Activated CD4-positive, alpha-beta memory T cell treated with anti-CD3 and anti-CD28 coated beads for 36 hours (primary cell): ENCODE measurements at regions of chr15 and their contacts with region 1.

Region 1: DNA sequence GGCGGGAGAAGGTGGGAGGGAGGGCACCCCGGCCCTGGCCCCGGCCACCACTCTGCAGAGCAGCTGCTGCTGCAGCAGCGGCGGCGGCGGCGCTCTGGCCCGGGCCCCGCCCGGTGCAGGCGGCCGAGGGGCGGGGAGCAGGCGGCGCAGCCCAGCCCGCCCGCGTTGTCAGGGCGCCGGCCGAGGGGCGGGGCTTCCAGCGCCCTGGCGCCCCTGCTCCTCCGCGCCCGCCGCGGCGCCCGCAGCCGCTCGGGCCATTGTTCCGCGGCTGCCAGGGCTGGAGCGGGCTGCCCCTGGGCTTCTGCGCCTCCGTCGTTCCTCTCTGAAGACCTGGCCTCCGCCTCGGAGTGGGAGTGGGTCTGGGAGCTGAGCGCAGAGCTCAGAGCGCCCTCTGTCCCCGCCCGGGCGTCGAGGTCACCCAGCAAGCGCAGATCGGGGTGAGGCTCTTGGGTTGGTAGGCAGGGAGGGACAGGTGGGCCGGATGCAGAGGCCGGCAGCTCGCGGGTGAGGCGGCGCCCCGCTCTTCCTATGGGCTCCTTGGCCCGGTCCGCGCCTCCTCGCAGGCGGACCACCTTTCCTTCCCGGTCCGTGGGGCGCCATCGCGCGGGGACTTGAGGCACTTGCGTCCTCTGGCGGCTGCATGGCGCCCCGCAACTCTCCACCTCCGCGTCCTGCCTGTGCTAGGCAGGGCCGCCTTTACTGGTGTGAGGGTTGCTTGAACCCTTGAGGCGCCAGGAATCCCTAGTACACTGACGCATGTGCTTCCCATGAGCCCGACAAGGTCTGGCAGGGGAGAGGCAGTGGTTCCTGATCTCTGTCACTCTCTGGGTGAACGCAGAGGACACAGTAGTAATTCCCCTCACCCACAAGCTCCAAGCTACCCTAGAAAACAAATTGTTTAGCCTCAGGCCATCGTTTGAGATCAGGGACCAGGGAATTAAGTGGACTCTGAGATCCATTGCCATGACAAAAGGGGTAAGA is at the start of gene LPCAT4:
- DNase-seq: peak; percentile 91
- H3K4me3 Mint-ChIP-seq: peak within 1 kb of the TSS; percentile 96
- H3K27ac Mint-ChIP-seq: peak within 1 kb of the TSS; percentile 96
- H3K4me1 Mint-ChIP-seq: peaks cover 41% of the 10 kb centered on the region
- H3K27me3 Mint-ChIP-seq: no peaks in the 10 kb centered on the region
- total RNA-seq, gene LPCAT4: 62.5 to 71.3 TPM

Region 2: DNA sequence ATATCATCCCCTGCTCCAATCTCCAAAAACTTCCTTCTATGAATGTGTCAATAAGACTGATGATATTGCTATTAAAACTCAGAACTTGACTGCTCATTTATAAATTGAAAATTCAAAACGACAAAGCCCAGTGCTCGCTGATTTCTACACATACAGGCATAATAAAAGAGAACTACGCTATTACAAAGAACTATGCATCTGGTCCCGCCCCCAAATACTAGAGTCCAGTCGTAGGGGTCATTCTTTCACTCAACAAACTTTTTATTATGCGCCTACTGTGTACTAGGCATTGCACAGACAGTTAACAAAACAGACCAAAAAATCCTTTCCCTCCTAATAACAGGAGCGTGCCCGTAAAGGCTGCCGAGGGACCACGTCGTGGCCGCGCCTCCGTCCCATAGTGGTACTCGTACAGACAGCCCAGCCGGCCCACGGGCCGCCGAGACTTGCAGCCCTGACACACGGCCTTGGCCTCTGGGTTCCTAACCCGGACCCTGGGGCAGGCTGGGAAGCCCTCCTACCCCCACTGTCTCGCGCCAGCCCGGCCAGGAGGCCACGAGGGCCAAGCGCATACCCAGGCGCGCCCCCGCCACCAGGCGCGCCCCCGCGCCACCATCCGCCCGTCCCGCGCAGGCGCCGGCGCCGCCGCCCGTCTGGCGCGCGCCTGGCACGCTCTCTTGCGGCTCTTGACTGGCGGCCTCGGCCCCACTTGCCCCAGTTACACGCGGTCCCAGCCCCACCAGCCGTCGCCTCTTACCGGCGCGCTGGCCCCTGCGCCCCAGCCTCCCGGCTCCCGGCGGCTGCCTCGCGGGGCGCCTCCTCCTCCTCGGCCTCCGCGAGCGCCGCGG is 329.1 kb before region 1 on chr15:
- CTCF ChIA-PET with region 1: interaction called, 3 read pairs
- POLR2A ChIA-PET with region 1: no interaction called
- intact Hi-C with region 1: loop called (anchors 1 kb)
- DNase-seq: peak; percentile 79
- H3K4me3 Mint-ChIP-seq: peak overlapping the region; percentile 85
- H3K27ac Mint-ChIP-seq: peak overlapping the region; percentile 90
- H3K4me1 Mint-ChIP-seq: peaks cover 25% of the 10 kb centered on the region
- H3K27me3 Mint-ChIP-seq: no peaks in the 10 kb centered on the region

Region 3: DNA sequence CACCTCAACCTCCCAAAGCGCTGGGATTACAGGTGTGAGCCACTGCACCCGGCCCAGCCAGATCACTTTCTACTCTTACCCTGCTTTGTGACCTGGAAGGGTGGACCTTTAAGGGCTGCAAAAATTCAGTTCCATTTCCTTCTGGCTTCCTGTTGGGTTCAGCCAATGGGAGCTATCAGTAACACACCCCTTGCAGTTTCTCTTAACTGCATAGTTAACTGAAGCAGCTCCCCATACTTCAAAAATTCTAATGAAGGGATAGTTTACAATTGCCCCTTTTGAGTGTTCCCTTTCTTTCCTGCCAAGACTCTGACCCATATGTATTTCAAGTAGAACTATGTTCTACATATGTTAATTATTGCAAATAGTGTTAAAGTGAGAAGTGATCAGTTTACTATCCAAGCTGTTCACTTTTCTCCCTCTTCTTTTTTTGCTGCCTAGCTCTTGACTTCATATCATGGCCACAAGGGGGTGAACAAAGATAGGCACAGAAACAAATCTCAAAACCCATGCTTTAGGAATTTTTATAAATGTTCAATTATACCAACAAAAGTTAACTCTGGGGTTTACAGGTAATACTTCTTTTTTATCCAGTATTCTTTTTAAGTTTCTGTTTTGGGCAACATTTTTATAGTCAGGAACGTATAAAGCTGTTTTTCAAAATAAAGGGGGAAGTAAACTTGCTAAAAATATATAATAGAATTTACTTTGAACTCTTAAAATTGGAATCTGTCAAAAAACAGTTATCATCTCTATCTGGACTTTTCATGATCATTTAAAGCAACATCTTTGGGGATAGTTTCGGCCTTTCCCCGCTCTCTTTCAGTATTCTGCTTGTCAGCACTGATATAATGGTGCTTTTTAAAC is 257.4 kb before region 1 on chr15:
- CTCF ChIA-PET with region 1: interaction called, 15 read pairs
- POLR2A ChIA-PET with region 1: interaction called, 3 read pairs
- intact Hi-C with region 1: no loop called
- DNase-seq: no peak
- H3K4me3 Mint-ChIP-seq: no peak overlapping the region
- H3K27ac Mint-ChIP-seq: no peak overlapping the region
- H3K4me1 Mint-ChIP-seq: no peaks in the 10 kb centered on the region
- H3K27me3 Mint-ChIP-seq: peaks cover 5% of the 10 kb centered on the region

Region 4: GRCh38 chr15:34223904-34224596 is 143.3 kb before region 1 on chr15:
- CTCF ChIA-PET with region 1: interaction called, 6 read pairs
- POLR2A ChIA-PET with region 1: interaction called, 15 read pairs
- intact Hi-C with region 1: loop called (anchors 1 kb)
- DNase-seq: no peak
- H3K4me3 Mint-ChIP-seq: peak overlapping the region; percentile 98
- H3K27ac Mint-ChIP-seq: peak overlapping the region; percentile 98
- H3K4me1 Mint-ChIP-seq: peaks cover 27% of the 10 kb centered on the region
- H3K27me3 Mint-ChIP-seq: peaks cover 2% of the 10 kb centered on the region

Region 5: DNA sequence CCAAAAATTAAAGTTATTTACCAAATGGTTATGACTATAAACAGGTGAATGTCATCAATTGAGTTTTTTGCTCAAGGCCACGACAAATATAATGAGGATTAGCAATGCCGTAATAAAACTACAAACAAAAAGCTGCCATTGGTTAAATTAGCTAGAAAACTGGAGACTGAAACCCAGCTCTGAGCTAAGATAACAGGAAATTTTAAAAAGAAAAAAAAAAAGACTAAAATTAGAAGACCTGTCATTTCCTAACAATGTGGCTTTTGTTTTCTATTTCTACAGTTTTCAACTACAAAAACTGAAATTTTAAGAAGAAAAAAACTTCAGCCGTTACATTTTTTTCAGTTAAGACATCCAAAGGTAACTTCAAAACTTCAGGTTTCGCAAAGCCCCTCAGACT is 39.5 kb before region 1 on chr15:
- CTCF ChIA-PET with region 1: interaction called, 20 read pairs
- POLR2A ChIA-PET with region 1: interaction called, 7 read pairs
- intact Hi-C with region 1: no loop called
- DNase-seq: no peak
- H3K4me3 Mint-ChIP-seq: peak overlapping the region; percentile 46
- H3K27ac Mint-ChIP-seq: peak overlapping the region; percentile 30
- H3K4me1 Mint-ChIP-seq: peaks cover 62% of the 10 kb centered on the region
- H3K27me3 Mint-ChIP-seq: no peaks in the 10 kb centered on the region

Region 6: GRCh38 chr15:34342737-34343575 is 24.4 kb before region 1 on chr15 and contains the starts of genes NOP10 and NUTM1:
- CTCF ChIA-PET with region 1: interaction called, 47 read pairs
- POLR2A ChIA-PET with region 1: interaction called, 29 read pairs
- intact Hi-C with region 1: loop called (anchors 1 kb)
- DNase-seq: peak; percentile 96
- H3K4me3 Mint-ChIP-seq: no peak within 1 kb of the TSS
- H3K27ac Mint-ChIP-seq: no peak within 1 kb of the TSS
- H3K4me1 Mint-ChIP-seq: peaks cover 29% of the 10 kb centered on the region
- H3K27me3 Mint-ChIP-seq: no peaks in the 10 kb centered on the region
- total RNA-seq, gene NOP10: 211 to 214 TPM
- total RNA-seq, gene NUTM1: not detected

Region 7: DNA sequence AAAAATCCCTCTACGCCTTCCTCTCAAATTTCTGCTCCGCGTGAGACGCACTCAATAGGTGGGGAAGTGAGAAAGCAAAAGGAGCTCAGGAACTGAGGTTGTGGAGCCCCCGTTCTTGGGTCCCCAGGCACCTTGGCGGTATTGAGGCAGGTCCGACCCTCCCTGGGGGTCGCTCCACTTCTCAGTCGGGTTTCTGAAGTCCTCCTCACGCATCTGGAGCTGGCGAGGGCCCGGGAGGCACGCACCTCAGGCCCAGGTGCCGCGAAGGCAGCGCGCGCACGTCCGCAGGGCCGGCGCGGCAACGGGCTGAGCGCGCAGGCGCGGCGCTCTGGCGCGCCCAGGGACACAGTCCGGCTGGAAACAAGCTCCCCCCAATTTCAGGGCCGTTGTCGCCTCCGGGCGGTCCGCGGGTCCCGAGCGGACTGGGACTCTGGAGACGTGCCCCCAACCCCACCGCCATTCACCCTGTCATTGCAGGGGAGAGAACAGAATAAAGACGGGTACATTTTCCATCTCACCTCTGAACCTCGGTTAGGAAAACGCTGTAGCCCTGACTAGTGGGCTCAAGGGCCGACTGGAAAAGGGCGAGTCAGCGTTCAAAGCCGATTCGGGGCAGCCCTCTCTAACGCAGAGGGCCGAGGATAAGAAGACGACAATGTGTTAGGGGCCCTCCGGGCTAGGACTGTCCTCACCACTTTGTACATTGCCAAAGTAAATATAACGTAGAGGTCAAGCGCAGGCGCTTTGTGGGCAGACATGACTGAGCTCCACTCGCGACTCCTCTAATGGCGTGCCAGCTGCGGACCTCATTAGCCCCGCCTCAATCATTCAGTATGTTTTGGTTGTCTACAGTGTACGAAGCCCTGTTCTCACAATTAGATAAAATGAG is 620.8 kb after region 1 on chr15 and contains the start of gene ZNF770:
- CTCF ChIA-PET with region 1: no interaction called
- POLR2A ChIA-PET with region 1: no interaction called
- intact Hi-C with region 1: loop called (anchors 5 kb)
- DNase-seq: peak; percentile 90
- H3K4me3 Mint-ChIP-seq: peak within 1 kb of the TSS; percentile 97
- H3K27ac Mint-ChIP-seq: peak within 1 kb of the TSS; percentile 100
- H3K4me1 Mint-ChIP-seq: peaks cover 36% of the 10 kb centered on the region
- H3K27me3 Mint-ChIP-seq: no peaks in the 10 kb centered on the region
- total RNA-seq, gene ZNF770: 36.6 to 38.5 TPM